ENCODE measurements at regions of chr18 and their contacts with region 1.

Region 1: DNA sequence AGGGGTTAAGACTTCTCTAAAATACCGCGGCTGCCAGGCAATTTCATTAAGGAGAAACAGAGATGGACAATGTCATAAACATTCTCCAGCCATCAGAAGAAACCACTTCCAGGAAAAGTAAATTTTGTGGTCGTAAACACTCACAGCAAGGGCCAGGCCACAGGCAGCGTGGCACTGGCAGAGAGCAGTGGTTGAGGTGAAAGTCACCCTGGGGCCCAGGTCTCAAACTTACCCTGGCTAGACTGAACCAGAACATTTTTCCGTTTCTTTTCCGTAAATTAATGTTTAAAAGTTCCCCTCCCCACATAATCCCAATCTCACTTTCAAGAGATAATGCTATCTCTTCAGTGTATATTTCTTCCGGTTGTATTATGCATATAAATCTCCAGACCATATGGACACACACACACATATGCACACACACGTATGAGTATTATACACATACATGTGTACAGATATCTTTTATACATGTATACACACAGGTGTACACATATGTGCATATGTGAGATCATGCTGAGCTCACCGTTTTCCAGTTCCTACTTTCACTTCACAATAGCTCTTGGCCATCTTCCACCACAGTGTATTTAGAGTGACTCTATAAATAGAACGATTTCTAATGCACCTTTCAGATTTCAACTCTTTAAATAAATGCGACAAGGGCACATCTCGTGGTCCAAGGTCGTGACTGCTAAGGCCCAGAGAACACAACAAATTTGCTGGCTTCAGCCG is 90.1 kb downstream of the MALT1 start:
- DNase-seq: no peak
- ATAC-seq: peak; percentile 38 to 66 (median 54)
- H3K4me3 ChIP-seq: no peak overlapping the region
- H3K27ac ChIP-seq: no peak overlapping the region
- H3K4me1 ChIP-seq: peaks cover 0 to 4% (median 0%) of the 10 kb centered on the region in 3 donors
- H3K27me3 ChIP-seq: peaks cover 0 to 5% (median 0%) of the 10 kb centered on the region in 4 donors
- CTCF ChIP-seq: no peak

Region 2: GRCh38 chr18:58535340-58536201 is 225.8 kb before region 1 on chr18:
- intact Hi-C with region 1: loop called in 2 of 3 experiments (anchors 5 to 10 kb)
- DNase-seq: no peak
- ATAC-seq: peak in 2 of 4 donors; percentile 65 to 66
- H3K4me3 ChIP-seq: no peak overlapping the region
- H3K27ac ChIP-seq: no peak overlapping the region
- H3K4me1 ChIP-seq: peaks cover 0 to 5% (median 4%) of the 10 kb centered on the region in 3 donors
- H3K27me3 ChIP-seq: no peaks in the 10 kb centered on the region
- CTCF ChIP-seq: no peak

Measured in pancreas (tissue), 10 donors.